Activated CD8-positive, alpha-beta T cell treated with anti-CD3 and anti-CD28 coated beads, Interleukin-2, amount 10 ng/mL, durations not matched to agents 7 days and 5 days (primary cell): ENCODE measurements at regions of chr17 and their contacts with region 1.

Region 1: GRCh38 chr17:69388822-69389442 is 25.6 kb upstream of the MAP2K6 start:
- DNase-seq: no peak
- ATAC-seq: no peak
- H3K4me3 Mint-ChIP-seq: no peak overlapping the region
- H3K27ac Mint-ChIP-seq: no peak overlapping the region
- H3K4me1 Mint-ChIP-seq: no peaks in the 10 kb centered on the region
- H3K27me3 Mint-ChIP-seq: peaks cover 14% of the 10 kb centered on the region

Region 2: DNA sequence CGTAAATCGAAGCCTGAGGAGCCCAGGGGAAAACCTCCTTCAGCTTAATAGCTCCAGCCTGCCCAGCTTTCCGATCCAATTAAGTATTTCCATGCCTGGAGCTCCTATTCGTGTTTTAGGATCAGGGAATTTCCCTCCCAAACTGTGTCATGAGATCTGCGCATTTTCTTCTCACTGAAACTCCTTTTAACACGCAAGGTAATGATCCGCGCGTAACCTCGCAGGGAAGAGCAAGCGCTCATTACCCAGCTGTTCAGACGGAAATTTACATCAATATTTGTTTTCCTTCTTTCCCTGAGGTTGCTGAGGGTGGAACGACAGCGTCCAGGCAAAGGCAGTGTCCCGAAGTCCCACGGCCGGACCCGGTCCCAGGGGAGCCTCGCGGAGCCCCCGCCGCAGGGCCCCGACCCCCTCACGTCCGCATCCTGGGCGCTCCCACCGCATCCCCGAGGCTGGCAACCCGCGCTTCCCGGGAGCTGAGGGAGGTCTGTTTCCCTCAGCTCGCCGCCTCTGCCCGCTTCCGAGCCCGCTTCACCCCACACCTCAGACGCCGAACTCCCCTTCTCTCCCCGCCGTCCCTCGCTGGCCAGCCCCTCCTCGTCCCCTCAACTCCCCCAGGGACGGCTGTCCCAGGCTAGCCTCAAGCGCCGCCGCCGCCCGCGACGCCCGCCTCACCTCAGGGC is 62.4 kb before region 1 on chr17:
- CTCF ChIA-PET with region 1: no interaction called
- POLR2A ChIA-PET with region 1: no interaction called
- DNase-seq: no peak
- ATAC-seq: no peak
- H3K4me3 Mint-ChIP-seq: peak overlapping the region; percentile 96
- H3K27ac Mint-ChIP-seq: peak overlapping the region; percentile 91
- H3K4me1 Mint-ChIP-seq: peaks cover 22% of the 10 kb centered on the region
- H3K27me3 Mint-ChIP-seq: peaks cover 8% of the 10 kb centered on the region

Region 3: DNA sequence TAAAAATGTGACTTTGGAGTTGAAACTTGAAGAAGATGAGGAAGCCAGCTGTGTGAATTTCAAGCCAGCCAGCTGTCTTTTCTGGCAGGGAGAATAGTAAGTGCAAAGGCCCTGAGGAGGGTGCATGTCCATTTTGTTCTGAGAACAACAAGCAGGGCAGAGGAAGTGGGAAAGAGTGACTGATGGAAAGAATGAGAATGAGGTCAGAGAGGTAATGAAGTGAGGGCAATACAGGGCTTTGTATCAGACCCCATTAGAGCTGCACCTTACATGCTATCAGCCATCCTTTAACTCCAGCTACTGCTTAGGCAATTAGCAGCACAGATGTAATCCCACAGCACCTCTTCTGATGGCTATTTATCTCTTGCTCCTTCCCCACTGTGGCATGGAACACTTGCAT is 27.8 kb before region 1 on chr17:
- CTCF ChIA-PET with region 1: interaction called, 12 read pairs
- POLR2A ChIA-PET with region 1: no interaction called
- DNase-seq: no peak
- ATAC-seq: no peak
- H3K4me3 Mint-ChIP-seq: no peak overlapping the region
- H3K27ac Mint-ChIP-seq: no peak overlapping the region
- H3K4me1 Mint-ChIP-seq: peaks cover 3% of the 10 kb centered on the region
- H3K27me3 Mint-ChIP-seq: peaks cover 2% of the 10 kb centered on the region

Region 4: GRCh38 chr17:69404382-69404781 is 15.4 kb after region 1 on chr17:
- CTCF ChIA-PET with region 1: interaction called, 18 read pairs
- POLR2A ChIA-PET with region 1: no interaction called
- DNase-seq: no peak
- ATAC-seq: no peak
- H3K4me3 Mint-ChIP-seq: no peak overlapping the region
- H3K27ac Mint-ChIP-seq: no peak overlapping the region
- H3K4me1 Mint-ChIP-seq: peaks cover 3% of the 10 kb centered on the region
- H3K27me3 Mint-ChIP-seq: peaks cover 3% of the 10 kb centered on the region